Mammary epithelial cell (primary cell): ENCODE measurements at regions of chr11 and their contacts with region 1.

Region 1: GRCh38 chr11:113796663-113797259 is 17.2 kb downstream of the CLDN25 start:
- DNase-seq: peak; percentile 40
- H3K4me3 ChIP-seq: no peak overlapping the region
- H3K27ac ChIP-seq: no peak overlapping the region
- H3K4me1 ChIP-seq: no peaks in the 10 kb centered on the region
- H3K27me3 ChIP-seq: no peaks in the 10 kb centered on the region
- CTCF ChIP-seq: peak; percentile 66 to 71

Region 2: DNA sequence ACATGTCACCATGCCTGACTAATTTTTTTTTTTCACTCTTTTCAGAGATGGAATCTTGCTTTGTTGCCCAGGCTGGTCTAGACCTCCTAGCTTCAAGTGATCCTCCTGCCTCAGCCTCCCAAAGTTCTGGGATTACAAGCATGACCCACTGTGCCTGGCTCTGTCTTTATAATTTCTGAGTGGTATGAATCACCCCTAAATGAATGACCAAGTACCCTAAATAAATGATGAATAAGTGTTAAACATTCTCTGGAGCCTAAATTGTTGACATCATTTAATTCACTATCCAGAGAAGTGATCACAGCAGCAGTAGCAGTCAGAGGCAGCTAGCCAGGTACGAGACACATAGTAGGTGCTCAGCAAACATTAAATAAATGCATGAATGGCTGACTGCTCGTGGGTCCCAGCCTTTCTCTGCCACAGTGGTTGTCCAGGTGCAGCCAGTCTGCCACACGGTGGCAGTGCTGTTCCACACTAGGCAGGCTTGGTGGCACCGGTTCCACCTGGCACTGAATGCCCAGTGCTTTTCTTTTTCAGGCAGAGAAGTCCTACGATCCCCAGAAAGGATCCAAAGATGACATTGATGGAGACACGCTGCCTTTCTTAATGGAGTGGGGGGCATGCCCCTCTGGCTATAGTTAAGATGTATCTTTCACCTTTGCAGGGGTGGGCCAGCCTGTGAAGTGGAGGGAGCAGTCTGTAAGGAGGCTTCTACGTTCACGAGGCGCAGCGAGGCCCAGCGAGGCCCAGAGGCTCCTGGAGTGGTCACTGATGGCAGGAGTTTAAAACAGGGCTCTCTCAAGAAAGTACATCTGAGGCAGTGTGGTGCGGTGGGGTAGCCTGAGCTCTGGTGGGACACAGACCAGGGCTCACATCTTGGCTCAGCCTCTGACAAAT is 491.1 kb before region 1 on chr11:
- CTCF ChIA-PET with region 1: no interaction called
- dilution Hi-C with region 1: no loop called
- in situ Hi-C with region 1: no loop called
- intact Hi-C with region 1: loop called (anchors 1 kb)
- DNase-seq: peak; percentile 61
- H3K4me3 ChIP-seq: no peak overlapping the region
- H3K27ac ChIP-seq: no peak overlapping the region
- H3K4me1 ChIP-seq: peaks cover 13% of the 10 kb centered on the region
- H3K27me3 ChIP-seq: no peaks in the 10 kb centered on the region
- CTCF ChIP-seq: peak; percentile 99

Region 3: GRCh38 chr11:113488931-113489351 is 307.8 kb before region 1 on chr11:
- CTCF ChIA-PET with region 1: no interaction called
- dilution Hi-C with region 1: no loop called
- in situ Hi-C with region 1: no loop called
- intact Hi-C with region 1: no loop called
- DNase-seq: peak; percentile 46
- H3K4me3 ChIP-seq: no peak overlapping the region
- H3K27ac ChIP-seq: no peak overlapping the region
- H3K4me1 ChIP-seq: no peaks in the 10 kb centered on the region
- H3K27me3 ChIP-seq: no peaks in the 10 kb centered on the region
- CTCF ChIP-seq: no peak

Region 4: GRCh38 chr11:113603277-113604059 is 193.3 kb before region 1 on chr11:
- CTCF ChIA-PET with region 1: no interaction called
- dilution Hi-C with region 1: no loop called
- in situ Hi-C with region 1: no loop called
- intact Hi-C with region 1: no loop called
- DNase-seq: no peak
- H3K4me3 ChIP-seq: no peak overlapping the region
- H3K27ac ChIP-seq: no peak overlapping the region
- H3K4me1 ChIP-seq: no peaks in the 10 kb centered on the region
- H3K27me3 ChIP-seq: no peaks in the 10 kb centered on the region
- CTCF ChIP-seq: no peak

Region 5: GRCh38 chr11:113736323-113736722 is 60.4 kb before region 1 on chr11:
- CTCF ChIA-PET with region 1: no interaction called
- dilution Hi-C with region 1: no loop called
- in situ Hi-C with region 1: no loop called
- intact Hi-C with region 1: no loop called
- DNase-seq: no peak
- H3K4me3 ChIP-seq: no peak overlapping the region
- H3K27ac ChIP-seq: no peak overlapping the region
- H3K4me1 ChIP-seq: peaks cover 4% of the 10 kb centered on the region
- H3K27me3 ChIP-seq: no peaks in the 10 kb centered on the region
- CTCF ChIP-seq: no peak

Region 6: GRCh38 chr11:113773416-113774173 is 23.2 kb before region 1 on chr11 and contains the start of gene ZW10:
- CTCF ChIA-PET with region 1: no interaction called
- dilution Hi-C with region 1: no loop called
- in situ Hi-C with region 1: no loop called
- intact Hi-C with region 1: loop called (anchors 1 kb)
- DNase-seq: peak; percentile 96
- H3K4me3 ChIP-seq: peak within 1 kb of the TSS; percentile 66 to 87 (median 66)
- H3K27ac ChIP-seq: peak within 1 kb of the TSS; percentile 86
- H3K4me1 ChIP-seq: peaks cover 18% of the 10 kb centered on the region
- H3K27me3 ChIP-seq: no peaks in the 10 kb centered on the region
- CTCF ChIP-seq: peak; percentile 80 to 86
- total RNA-seq, gene ZW10: 18.6 to 22.5 TPM